Transverse colon (tissue), 4 donors: ENCODE measurements at regions of chrX and their contacts with region 1.

Region 1: DNA sequence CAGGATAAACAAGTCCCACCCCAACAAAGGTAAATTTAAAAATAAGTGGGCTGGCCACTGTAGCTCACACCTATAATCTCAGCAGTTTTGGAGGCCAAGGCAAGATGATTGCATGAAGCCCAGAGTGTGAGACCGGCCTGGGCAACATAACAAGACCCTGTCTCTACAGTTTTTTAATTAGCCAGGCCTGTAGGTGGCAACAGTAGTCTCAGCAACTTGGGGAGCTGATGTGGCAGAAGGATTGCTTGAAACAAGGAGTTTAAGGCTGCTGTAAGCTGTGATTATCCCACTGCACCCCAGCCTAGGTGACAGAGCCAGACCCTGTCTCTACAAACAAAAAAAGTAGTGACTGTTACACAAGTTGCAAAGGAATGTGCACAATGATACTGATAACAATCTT is 74.6 kb upstream of the FAAH2 start:
- DNase-seq: no peak
- H3K4me3 ChIP-seq: no peak overlapping the region
- H3K27ac ChIP-seq: no peak overlapping the region
- H3K4me1 ChIP-seq: no peaks in the 10 kb centered on the region
- H3K27me3 ChIP-seq: no peaks in the 10 kb centered on the region
- CTCF ChIP-seq: no peak
- EP300 ChIP-seq: no peak
- POLR2A ChIP-seq: no peak

Region 2: DNA sequence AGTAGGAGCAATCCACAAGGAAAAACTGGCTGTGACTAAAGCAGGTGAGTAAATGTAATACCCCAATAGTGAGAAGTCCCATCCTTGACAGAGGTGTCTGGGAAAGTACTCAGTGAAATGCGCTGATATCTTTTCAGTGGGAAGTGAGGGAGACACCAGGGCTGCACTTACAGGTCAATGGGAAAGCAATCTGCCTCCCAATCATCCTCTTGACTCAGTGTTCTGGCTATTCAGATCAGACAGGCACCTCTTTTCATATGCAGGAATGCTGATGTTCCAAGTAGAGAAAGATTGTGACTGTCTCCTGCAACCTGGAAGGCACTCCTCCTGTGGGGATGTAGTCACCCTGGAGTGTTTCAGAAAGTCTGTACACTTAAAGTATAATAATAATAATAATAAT is 34.8 kb before region 1 on chrX:
- in situ Hi-C with region 1: no loop called
- intact Hi-C with region 1: loop called (anchors 2 kb)
- DNase-seq: no peak
- H3K4me3 ChIP-seq: no peak overlapping the region
- H3K27ac ChIP-seq: no peak overlapping the region
- H3K4me1 ChIP-seq: no peaks in the 10 kb centered on the region
- H3K27me3 ChIP-seq: no peaks in the 10 kb centered on the region
- CTCF ChIP-seq: no peak
- EP300 ChIP-seq: no peak
- POLR2A ChIP-seq: no peak